ENCODE measurements at regions of chr9 and their contacts with region 1.

Region 1: DNA sequence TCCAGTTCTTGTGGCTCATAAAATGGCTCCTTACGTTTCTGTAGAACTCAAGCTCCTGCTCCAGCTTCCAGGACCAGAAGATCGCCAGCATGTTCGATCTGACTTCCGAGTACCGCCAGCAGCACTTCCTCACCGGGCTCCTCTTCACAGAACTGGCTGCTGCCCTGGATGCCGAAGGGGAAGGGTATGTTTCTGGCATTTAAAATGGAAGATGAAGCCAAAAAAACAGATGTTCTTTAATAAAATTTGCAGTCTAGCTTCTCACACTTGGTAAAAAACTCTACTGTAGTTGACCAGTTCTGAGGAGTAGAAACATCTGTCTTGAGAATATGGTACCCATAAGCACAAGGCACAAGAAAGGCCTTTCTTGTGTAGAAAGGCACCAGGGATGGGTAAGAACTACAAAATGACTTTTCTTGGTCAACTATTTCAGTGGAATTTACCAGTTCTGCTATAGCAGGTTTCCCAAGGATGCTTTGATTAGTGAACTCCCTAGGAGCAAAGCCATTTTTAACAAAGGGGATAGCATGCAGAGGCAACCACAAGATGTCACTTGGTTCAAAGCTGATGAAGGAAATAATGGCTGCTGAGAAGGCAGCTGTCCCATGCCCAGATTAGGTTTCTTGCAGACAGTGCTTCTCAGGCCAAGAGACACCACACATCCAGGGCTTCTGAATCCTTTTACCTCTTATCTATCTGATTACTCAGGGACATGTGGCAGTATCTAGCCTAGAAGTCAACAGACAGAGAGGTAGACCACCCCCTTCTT is 192.4 kb downstream of the DOCK8 start:
- DNase-seq: peak in 1 of 2 donors; percentile 20
- ATAC-seq: peak; percentile 61 to 91 (median 83)
- H3K4me3 ChIP-seq: no peak overlapping the region
- H3K27ac ChIP-seq: no peak overlapping the region
- H3K4me1 ChIP-seq: no peaks in the 10 kb centered on the region
- H3K27me3 ChIP-seq: no peaks in the 10 kb centered on the region
- CTCF ChIP-seq: peak in 7 of 9 donors; percentile 29 to 59 (median 54)

Region 2: GRCh38 chr9:326667-327066 is 80.4 kb before region 1 on chr9:
- intact Hi-C with region 1: no loop called
- DNase-seq: no peak
- ATAC-seq: no peak
- H3K4me3 ChIP-seq: no peak overlapping the region
- H3K27ac ChIP-seq: no peak overlapping the region
- H3K4me1 ChIP-seq: no peaks in the 10 kb centered on the region
- H3K27me3 ChIP-seq: peaks cover 0 to 14% (median 0%) of the 10 kb centered on the region in 7 donors
- CTCF ChIP-seq: no peak

Region 3: GRCh38 chr9:378263-378662 is 28.8 kb before region 1 on chr9:
- intact Hi-C with region 1: no loop called
- DNase-seq: no peak
- ATAC-seq: no peak
- H3K4me3 ChIP-seq: no peak overlapping the region
- H3K27ac ChIP-seq: no peak overlapping the region
- H3K4me1 ChIP-seq: no peaks in the 10 kb centered on the region
- H3K27me3 ChIP-seq: peaks cover 0 to 24% (median 3%) of the 10 kb centered on the region in 7 donors
- CTCF ChIP-seq: no peak

Region 4: GRCh38 chr9:546797-547223 is 139.7 kb after region 1 on chr9:
- intact Hi-C with region 1: loop called in 1 of 10 experiments (anchors 10 kb)
- DNase-seq: peak in 1 of 2 donors; percentile 31
- ATAC-seq: peak; percentile 62 to 83 (median 77)
- H3K4me3 ChIP-seq: peak overlapping the region in 5 of 10 donors; percentile 23 to 34 (median 31)
- H3K27ac ChIP-seq: peak overlapping the region; percentile 8 to 80 (median 70)
- H3K4me1 ChIP-seq: peaks cover 0 to 64% (median 41%) of the 10 kb centered on the region in 9 donors
- H3K27me3 ChIP-seq: no peaks in the 10 kb centered on the region
- CTCF ChIP-seq: peak in 8 of 9 donors; percentile 30 to 65 (median 42)

Region 5: DNA sequence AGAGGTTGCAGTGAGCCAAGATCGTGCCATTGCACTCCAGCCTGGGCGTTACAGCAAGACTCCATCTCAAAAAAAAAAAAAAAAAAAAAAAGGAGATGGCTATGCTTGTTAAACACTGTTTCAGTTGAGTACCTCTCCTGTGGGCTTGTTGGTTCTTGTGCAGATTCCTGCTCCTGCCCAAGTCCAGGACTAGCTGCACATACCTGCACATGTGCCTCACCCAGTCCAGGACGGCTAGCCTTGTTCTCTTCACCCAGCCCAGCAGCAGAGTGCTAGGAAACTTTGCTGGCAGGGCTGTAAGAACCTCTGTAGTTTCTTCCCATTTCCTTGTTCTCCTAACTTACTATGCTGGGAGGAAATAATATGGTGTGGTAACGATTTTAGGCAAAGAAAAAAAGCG is 200.3 kb after region 1 on chr9:
- intact Hi-C with region 1: loop called in 3 of 10 experiments (anchors 10 kb)
- DNase-seq: no peak
- ATAC-seq: peak in 1 of 8 donors; percentile 20
- H3K4me3 ChIP-seq: no peak overlapping the region
- H3K27ac ChIP-seq: no peak overlapping the region
- H3K4me1 ChIP-seq: peaks cover 0 to 30% (median 8%) of the 10 kb centered on the region in 9 donors
- H3K27me3 ChIP-seq: no peaks in the 10 kb centered on the region
- CTCF ChIP-seq: no peak

Region 6: DNA sequence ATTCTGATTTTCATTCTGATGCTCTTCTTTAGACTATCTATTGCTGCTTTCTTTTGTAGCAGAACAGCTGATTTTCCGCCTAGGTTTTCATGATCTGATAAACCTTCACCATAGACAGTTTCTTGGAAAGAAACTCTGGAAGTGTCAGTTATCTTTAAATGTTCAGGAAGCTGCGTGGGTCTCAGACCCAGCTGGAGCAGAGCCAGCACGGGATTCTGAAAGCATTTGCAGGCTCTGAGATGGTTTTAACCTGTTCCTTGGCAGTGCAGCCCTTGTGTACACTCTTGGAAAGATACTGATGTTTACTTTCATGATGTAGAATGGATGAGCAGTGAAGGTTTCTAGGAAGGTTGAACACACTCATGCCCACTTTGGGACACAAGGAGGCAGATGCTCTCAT is 256.5 kb after region 1 on chr9:
- intact Hi-C with region 1: no loop called
- DNase-seq: no peak
- ATAC-seq: no peak
- H3K4me3 ChIP-seq: no peak overlapping the region
- H3K27ac ChIP-seq: peak overlapping the region in 2 of 10 donors; percentile 2 to 39
- H3K4me1 ChIP-seq: peaks cover 0 to 22% (median 9%) of the 10 kb centered on the region in 9 donors
- H3K27me3 ChIP-seq: no peaks in the 10 kb centered on the region
- CTCF ChIP-seq: no peak

Region 7: DNA sequence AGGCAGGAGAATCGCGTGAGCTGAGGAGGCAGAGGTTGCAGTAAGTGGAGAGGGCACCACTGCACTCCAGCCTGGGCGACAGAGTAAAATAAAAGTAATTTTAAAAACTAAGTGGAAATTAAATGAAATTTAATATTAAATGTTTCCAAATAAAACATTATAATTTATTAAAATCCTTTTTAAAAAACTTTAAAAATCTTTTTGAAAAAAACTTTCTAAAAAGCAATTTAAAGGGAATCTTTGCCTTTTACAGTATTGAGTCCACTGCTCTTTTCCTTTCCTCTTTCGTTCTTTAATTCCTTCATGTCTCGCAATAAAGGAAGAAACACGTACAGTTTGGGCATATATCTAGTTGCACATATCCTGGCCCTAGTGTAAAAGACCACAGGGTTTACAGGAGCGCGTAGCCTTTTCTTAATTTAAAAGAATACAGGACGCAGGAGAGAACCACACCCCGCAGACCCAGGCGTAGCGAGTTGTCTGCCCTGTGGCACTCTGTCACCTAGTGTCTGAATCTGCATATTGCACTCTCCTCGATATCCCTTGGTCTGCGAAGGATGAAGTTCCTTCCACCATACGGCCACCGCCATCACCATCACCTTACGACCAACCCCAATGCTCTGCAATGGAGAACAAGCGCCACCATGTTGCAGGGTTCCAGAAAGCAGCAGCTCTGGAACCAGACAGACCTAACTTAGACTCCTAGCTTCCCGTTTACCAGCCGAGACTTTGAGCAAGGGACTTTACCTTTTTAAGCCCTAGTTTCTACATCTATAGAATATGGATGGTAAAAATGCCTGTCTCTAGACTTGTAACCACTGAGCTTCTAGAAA is 356.8 kb after region 1 on chr9:
- intact Hi-C with region 1: loop called in 6 of 10 experiments (anchors 2 to 10 kb)
- DNase-seq: peak; percentile 38 to 74
- ATAC-seq: peak; percentile 90 to 98 (median 96)
- H3K4me3 ChIP-seq: peak overlapping the region in 5 of 10 donors; percentile 10 to 41 (median 29)
- H3K27ac ChIP-seq: no peak overlapping the region
- H3K4me1 ChIP-seq: peaks cover 0 to 15% (median 0%) of the 10 kb centered on the region in 9 donors
- H3K27me3 ChIP-seq: peaks cover 0 to 12% (median 0%) of the 10 kb centered on the region in 7 donors
- CTCF ChIP-seq: peak; percentile 64 to 96 (median 92)